ENCODE measurements at regions of chr2 and their contacts with region 1.

Region 1: DNA sequence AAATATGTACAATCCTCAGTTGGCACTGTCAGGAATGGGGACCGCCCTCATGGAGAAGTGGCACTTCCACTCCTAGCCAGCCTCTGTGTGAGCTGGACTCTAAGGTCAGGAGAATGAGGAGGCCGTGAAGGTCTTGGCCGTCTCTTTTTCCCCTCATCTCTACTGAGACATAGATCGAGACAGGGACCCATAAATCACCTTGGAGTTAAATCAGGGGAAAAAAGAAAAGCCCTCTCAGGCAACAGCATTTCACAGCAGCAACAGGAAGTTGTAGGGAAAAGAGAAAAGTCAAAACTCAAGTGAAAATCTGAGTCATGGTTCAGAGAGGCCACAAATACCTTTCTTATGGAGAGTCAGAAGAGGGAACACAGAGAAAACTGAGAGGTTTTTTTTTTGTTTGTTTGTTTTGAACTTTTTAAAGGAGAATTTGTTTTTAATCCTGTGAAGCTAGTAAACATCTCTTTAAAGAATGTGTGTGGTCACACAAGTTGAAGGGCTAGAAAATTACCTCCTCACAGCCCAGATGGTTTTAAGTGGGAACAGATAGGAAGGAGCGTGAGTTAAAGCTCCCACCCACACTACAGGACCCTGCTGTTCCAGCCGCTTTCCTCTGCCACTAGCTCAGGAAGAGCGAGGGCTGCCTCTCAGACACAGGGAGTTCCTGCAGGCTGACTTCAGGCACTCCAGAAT is 30.6 kb upstream of the CYP1B1 start:
- DNase-seq: no peak
- ATAC-seq: peak; percentile 67
- H3K4me3 ChIP-seq: peak overlapping the region in 1 of 2 experiments; percentile 19; a peak in 2 of 4 replicates
- H3K27ac ChIP-seq: peak overlapping the region; percentile 95
- H3K4me1 ChIP-seq: peaks cover 35% of the 10 kb centered on the region
- H3K27me3 ChIP-seq: no peaks in the 10 kb centered on the region
- CTCF ChIP-seq: no peak

Region 2: DNA sequence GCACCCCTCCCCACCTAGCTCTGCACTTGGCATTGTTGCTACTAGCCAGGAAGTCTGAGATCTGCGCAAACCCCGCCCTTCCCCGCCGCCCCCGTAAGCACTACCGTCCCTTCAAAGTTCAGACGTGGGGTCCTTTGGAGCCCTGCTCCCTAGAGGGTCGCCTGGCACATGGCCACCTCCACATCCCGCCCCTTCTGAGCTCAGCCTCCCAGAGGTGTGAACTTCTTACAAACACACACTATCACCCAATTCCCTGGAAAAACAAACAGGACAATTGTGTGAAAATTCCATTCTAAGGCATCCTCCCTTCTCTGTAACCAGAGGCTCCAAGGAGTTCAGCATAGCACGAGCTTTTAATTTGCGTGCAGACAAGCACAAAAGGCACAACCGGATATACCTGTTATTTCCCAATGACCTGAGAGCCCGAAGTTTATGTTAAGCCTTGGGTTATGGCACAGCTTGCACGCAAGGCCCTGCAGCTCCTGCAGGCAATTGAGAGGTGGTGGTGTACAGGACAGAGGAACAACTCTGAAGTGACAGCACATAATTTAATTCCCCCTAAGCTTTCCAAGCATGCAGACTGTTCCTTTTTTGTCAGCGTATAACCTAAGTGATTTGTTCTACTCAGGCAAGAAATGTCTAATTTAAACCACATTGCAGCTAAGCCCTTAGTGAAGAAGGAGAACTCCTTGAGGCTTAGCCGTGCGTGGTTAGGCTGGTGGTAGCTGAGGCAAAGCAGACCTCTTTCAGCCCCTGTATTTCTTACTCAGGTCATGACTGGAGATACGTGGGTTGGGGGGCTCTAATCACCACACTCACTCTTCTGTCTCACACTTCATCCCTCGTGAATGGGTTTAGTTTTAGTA is 10.3 kb before region 1 on chr2:
- CTCF ChIA-PET with region 1: interaction called, 17 read pairs
- POLR2A ChIA-PET with region 1: no interaction called
- in situ Hi-C with region 1: no loop called
- intact Hi-C with region 1: no loop called
- DNase-seq: no peak
- ATAC-seq: peak; percentile 80
- H3K4me3 ChIP-seq: peak overlapping the region; percentile 10 to 50
- H3K27ac ChIP-seq: peak overlapping the region; percentile 98
- H3K4me1 ChIP-seq: peaks cover 76% of the 10 kb centered on the region
- H3K27me3 ChIP-seq: no peaks in the 10 kb centered on the region
- CTCF ChIP-seq: no peak